ENCODE measurements at regions of chr1 and their contacts with region 1.

Region 1: DNA sequence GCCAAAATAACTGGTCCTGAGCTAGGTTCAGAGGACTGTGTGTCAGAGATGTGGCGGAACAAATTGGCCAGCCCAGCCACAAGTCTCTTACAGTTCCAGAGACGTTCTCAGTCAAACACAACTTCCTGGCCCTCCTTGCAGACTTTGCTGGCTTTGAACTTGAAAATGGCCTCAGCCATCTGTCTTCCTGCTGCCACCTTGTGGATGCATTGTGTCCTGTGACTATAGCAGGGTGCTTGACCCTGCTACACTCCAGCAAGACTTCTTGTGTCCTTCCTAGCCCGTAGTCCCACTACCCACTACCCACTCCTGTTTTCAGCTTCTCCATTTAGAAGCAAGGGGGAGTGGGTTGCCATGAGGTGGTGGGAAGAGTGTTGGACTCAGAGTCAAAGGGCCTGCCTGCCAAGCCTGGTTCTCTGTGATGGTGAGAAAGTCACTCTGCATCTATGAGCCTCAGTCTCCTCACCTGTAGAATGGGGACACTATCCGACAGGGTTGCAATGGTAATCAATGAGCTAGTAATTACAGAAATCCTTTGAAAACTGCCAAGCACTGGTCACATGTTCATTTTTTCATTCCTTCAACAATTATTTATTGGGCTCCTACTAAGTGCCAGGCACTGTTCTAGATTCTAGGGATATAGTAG is 109.9 kb downstream of the IGSF21 start:
- DNase-seq: peak; percentile 67
- H3K4me3 ChIP-seq: no peak overlapping the region
- H3K27ac ChIP-seq: no peak overlapping the region
- H3K4me1 ChIP-seq: no peaks in the 10 kb centered on the region
- CTCF ChIP-seq: peak; percentile 83

Region 2: DNA sequence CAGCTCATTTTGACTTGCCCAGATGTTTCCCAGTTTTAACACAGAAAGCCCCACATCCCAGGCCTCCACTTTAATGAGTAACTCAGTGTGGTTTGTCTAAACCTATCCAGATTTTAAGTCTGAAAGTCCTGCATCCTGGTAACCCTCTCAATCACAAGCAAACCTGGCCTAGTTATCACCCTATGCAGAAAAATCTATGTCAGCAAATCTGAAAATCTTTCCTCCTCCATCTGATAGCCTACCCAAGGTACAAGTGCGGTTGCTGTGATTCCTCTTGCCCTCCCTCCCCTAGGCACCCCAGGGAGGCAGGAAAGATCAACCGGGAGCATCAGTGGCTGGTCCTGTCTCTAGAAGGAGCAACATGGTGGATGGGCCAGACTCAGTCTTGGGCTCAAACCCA is 53.8 kb after region 1 on chr1:
- CTCF ChIA-PET with region 1: no interaction called
- POLR2A ChIA-PET with region 1: no interaction called
- intact Hi-C with region 1: no loop called
- DNase-seq: no peak
- H3K4me3 ChIP-seq: no peak overlapping the region
- H3K27ac ChIP-seq: no peak overlapping the region
- H3K4me1 ChIP-seq: peaks cover 24% of the 10 kb centered on the region
- CTCF ChIP-seq: no peak

Region 3: GRCh38 chr1:18309552-18310155 is 92.1 kb after region 1 on chr1:
- CTCF ChIA-PET with region 1: no interaction called
- POLR2A ChIA-PET with region 1: no interaction called
- intact Hi-C with region 1: no loop called
- DNase-seq: no peak
- H3K4me3 ChIP-seq: no peak overlapping the region
- H3K27ac ChIP-seq: no peak overlapping the region
- H3K4me1 ChIP-seq: no peaks in the 10 kb centered on the region
- CTCF ChIP-seq: no peak

Region 4: GRCh38 chr1:18569811-18570545 is 352.5 kb after region 1 on chr1:
- CTCF ChIA-PET with region 1: no interaction called
- POLR2A ChIA-PET with region 1: no interaction called
- intact Hi-C with region 1: loop called (anchors 5 kb)
- DNase-seq: no peak
- H3K4me3 ChIP-seq: no peak overlapping the region
- H3K27ac ChIP-seq: no peak overlapping the region
- H3K4me1 ChIP-seq: peaks cover 22% of the 10 kb centered on the region
- CTCF ChIP-seq: no peak